Thyroid gland (tissue), 4 donors: ENCODE measurements at regions of chr5 and their contacts with region 1.

Region 1: GRCh38 chr5:170225326-170226128 is 7.3 kb upstream of the C5orf58 start:
- DNase-seq: peak; percentile 71 to 77
- H3K4me3 ChIP-seq: no peak overlapping the region
- H3K27ac ChIP-seq: no peak overlapping the region
- H3K4me1 ChIP-seq: no peaks in the 10 kb centered on the region
- H3K27me3 ChIP-seq: no peaks in the 10 kb centered on the region
- CTCF ChIP-seq: peak; percentile 24 to 80 (median 68)
- POLR2A ChIP-seq: no peak

Region 2: DNA sequence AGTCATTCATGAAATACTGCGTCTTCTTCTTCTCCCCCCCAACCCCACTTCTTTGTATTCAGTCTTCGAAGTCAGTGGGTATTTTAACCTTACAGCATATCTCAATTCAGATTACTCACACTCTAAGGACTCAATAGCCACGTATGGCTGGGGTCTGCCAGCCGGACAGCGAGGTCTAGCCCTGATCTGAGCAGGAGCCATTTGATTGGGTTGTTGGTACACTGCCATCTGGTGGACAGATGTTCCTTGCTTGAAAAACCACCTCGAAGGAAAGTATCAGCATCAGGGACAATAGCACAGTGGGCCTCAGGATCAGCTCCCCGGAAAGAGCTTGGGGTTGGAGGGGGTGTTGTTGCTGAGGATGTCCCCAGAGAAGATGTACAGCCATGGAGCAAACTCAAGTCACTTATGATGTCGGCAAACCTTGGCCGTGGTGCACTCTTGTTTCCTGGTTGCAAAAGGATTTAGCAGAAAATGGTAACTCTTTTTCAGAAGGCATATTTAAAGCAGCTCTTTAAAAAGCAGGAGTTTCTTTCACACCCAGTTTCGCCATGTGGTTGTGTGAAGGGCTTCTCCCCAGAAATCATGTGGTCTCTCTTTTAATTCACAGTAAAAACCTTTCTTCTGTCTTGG is 195.4 kb after region 1 on chr5:
- intact Hi-C with region 1: loop called (anchors 5 kb)
- DNase-seq: peak; percentile 49 to 56
- H3K4me3 ChIP-seq: no peak overlapping the region
- H3K27ac ChIP-seq: no peak overlapping the region
- H3K4me1 ChIP-seq: no peaks in the 10 kb centered on the region
- H3K27me3 ChIP-seq: no peaks in the 10 kb centered on the region
- CTCF ChIP-seq: peak in 5 of 6 experiments; percentile 37 to 80 (median 69)
- POLR2A ChIP-seq: no peak